SK-N-SH (cell line): ENCODE measurements at regions of chr18 and their contacts with region 1.

Region 1: GRCh38 chr18:56650944-56651770 is at the start of gene WDR7:
- DNase-seq: peak; percentile 82
- H3K4me3 ChIP-seq: peak within 1 kb of the TSS; percentile 84 to 96
- H3K27ac ChIP-seq: peak within 1 kb of the TSS; percentile 55 to 83; a peak in 3 of 4 replicates
- H3K4me1 ChIP-seq: peaks cover 0 to 13% of the 10 kb centered on the region in 2 experiments; a peak in 2 of 4 replicates
- H3K27me3 ChIP-seq: no peaks in the 10 kb centered on the region
- CTCF ChIP-seq: 0 out of 2 replicates have a peak, but pooled peaks have one; percentile 16
- EP300 ChIP-seq: no peak
- RAD21 ChIP-seq: no peak
- polyA plus RNA-seq, gene WDR7: 2.6 and 4.1 TPM in 2 replicates

Region 2: GRCh38 chr18:56638271-56639093 is 12.7 kb before region 1 on chr18 and contains the start of gene TXNL1:
- CTCF ChIA-PET with region 1: interaction called, 15 read pairs
- POLR2A ChIA-PET with region 1: interaction called, 10 read pairs
- DNase-seq: peak; percentile 97
- H3K4me3 ChIP-seq: peak within 1 kb of the TSS; percentile 88 to 97
- H3K27ac ChIP-seq: peak within 1 kb of the TSS; percentile 95 to 97
- H3K4me1 ChIP-seq: peaks cover 0 to 7% of the 10 kb centered on the region in 2 experiments; a peak in 2 of 4 replicates
- H3K27me3 ChIP-seq: no peaks in the 10 kb centered on the region
- CTCF ChIP-seq: no peak
- EP300 ChIP-seq: peak; percentile 35 to 41; a peak in 2 of 4 replicates
- RAD21 ChIP-seq: no peak
- polyA plus RNA-seq, gene TXNL1: 37.4 and 39.7 TPM in 2 replicates

Region 3: DNA sequence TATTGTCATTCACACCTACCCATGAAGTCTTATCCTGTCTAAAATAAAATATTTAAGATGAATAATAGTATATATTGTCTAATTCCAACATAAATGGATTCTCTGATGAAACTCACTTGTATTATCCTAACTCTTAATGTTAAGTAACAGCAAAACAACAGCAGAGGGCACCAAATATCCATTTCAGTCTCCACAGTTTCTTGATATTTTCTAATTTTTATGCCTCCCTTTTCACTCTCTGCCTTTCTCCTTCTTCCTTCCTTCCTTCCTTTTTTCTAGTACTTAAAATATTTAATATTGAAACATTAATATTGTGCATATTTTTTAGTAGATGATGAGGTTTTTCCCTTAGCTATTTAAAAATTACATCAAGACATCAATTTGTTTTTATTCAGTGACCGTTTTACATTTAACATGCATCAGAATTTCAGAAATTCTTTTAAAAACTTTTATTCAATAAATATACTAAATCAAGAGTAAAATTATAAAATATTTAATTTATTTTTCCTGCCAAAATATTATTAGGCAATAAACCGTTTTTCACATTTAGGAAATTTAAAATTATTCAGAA is 97.6 kb after region 1 on chr18:
- CTCF ChIA-PET with region 1: no interaction called
- POLR2A ChIA-PET with region 1: no interaction called
- DNase-seq: peak; percentile 43
- H3K4me3 ChIP-seq: no peak overlapping the region
- H3K27ac ChIP-seq: no peak overlapping the region
- H3K4me1 ChIP-seq: no peaks in the 10 kb centered on the region
- H3K27me3 ChIP-seq: no peaks in the 10 kb centered on the region
- CTCF ChIP-seq: peak; percentile 81
- EP300 ChIP-seq: no peak
- RAD21 ChIP-seq: peak; percentile 90